Right ventricle myocardium superior (tissue), 1 donor: ENCODE measurements at regions of chr14 and their contacts with region 1.

Region 1: DNA sequence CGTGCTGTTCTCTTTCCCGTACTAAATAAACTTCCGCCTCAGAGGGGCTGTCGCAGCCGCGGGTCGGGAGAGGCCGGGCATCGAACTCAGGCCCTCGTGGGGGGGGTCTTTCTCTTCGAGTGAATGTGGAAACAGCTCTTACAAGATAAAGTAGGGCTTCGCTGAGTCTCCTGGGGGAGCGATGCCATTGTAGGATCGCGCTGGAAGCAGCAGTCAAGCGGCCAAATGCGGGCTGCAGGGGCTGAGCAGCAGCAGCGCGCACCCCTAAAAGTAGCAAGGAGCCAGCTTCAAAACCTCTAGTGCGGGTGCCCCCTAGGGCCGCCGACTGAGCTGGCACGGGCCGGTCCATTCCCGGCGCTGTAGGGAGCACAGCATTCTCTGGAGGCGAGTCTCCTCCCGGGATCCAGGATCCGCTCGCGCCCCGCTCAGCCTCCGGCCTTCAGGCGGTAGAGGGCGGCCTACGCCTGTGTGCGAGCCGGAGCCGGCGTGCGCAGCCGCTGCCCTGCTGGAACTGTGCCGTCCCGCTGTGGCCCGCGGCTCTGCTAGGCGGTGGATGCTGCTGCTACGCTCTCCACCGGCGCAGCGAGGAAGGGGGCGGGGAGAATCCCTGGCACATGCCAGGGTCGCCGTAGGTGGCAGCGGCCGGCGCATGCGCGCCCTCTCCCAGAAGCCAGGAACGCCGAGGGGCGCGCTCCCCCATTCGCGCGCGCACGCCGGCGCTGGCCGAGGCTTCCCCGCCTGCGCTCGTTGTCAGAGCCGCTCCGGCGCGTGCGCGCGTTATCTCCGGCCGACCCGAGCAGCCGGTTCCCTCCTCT is at the start of gene FUT8:
- DNase-seq: peak; percentile 98
- ATAC-seq: peak; percentile 96
- total RNA-seq, gene FUT8: 9.9 TPM

Region 2: DNA sequence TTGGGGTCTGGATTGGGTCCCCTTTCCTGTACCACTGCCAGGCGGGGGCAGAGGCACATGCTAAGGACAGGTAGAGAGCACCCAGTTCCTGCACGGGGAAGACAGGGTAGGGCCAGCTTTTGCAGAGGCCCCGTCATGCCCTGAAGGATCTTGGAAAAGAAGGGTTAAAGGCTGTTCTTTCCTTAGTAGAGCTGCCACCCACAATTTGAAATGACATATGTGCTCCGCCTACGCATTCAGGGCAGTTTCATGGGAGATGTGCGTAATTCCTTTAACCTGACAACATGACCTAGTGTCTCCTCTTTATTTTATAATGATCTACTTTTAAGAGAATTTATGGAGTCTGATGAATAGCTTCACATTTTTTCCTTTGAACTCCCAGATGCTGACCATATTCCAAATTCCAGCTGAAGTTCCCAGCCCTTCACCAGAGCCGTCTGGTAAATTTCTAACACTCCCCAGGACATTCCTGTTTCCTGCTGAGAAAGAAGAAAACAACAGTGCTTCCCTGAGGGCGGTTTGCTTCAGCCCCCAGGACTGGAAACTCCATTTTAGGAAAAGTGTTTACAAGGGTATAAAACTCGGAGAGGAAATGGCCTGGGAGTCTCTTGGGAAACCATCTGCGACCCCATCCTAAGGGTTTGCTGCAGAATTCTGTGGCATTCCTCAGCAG is 766.9 kb before region 1 on chr14:
- intact Hi-C with region 1: no loop called
- DNase-seq: no peak
- ATAC-seq: peak; percentile 20

Region 3: DNA sequence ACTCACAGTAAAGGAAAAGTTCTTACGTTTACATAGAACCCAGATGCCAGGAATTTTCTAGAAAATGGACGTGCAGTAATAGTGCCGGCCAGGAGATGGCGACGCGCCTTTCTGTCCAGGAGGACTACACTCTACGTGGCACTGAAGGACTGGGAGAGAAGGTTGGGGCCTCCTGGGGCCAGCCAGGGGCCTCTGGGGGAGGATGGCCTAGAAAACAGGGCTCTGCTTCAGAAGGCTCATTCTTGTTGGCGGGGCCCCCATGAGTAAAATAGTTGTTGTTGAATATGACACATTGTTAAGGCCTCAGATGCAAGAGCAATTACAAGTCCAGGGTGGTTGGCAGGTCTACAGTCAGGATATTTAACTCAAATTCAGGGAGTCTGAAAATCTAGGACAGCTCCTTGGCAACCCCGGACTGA is 189.8 kb before region 1 on chr14:
- intact Hi-C with region 1: loop called (anchors 5 kb)
- DNase-seq: peak; percentile 69
- ATAC-seq: peak; percentile 60

Region 4: GRCh38 chr14:65824285-65824977 is 412.2 kb after region 1 on chr14:
- intact Hi-C with region 1: loop called (anchors 5 kb)
- DNase-seq: no peak
- ATAC-seq: peak; percentile 87

Region 5: DNA sequence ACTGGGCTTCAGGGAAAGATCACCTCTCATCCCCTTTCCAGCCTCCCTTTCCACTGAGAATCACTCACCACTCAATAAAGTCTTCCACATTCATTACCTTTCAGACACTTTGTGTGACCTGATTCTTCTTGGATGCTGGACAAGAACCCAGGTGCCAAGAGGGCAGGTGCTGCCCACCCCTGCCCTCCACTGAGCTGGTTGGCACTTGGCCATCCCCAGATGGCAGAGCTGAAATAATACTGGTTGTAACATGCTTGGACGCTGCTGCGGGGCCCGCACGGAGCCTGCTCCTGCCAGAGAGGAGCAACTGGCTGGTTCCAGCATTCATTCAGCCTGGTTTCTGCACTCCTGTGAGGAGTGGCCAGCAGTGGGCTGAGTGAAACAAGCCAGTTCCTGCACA is 687.2 kb after region 1 on chr14:
- intact Hi-C with region 1: no loop called
- DNase-seq: no peak
- ATAC-seq: no peak